PC-9 (cell line): ENCODE measurements at regions of chr3 and their contacts with region 1.

Region 1: GRCh38 chr3:134373994-134374790 is at the start of gene AMOTL2:
- DNase-seq: peak; percentile 86 to 98
- H3K4me3 ChIP-seq: peak within 1 kb of the TSS; percentile 100
- H3K27ac ChIP-seq: peak within 1 kb of the TSS; percentile 98
- H3K4me1 ChIP-seq: peaks cover 70% of the 10 kb centered on the region
- H3K27me3 ChIP-seq: no peaks in the 10 kb centered on the region
- CTCF ChIP-seq: no peak
- total RNA-seq, gene AMOTL2: 147 and 221 TPM in 2 replicates

Region 2: DNA sequence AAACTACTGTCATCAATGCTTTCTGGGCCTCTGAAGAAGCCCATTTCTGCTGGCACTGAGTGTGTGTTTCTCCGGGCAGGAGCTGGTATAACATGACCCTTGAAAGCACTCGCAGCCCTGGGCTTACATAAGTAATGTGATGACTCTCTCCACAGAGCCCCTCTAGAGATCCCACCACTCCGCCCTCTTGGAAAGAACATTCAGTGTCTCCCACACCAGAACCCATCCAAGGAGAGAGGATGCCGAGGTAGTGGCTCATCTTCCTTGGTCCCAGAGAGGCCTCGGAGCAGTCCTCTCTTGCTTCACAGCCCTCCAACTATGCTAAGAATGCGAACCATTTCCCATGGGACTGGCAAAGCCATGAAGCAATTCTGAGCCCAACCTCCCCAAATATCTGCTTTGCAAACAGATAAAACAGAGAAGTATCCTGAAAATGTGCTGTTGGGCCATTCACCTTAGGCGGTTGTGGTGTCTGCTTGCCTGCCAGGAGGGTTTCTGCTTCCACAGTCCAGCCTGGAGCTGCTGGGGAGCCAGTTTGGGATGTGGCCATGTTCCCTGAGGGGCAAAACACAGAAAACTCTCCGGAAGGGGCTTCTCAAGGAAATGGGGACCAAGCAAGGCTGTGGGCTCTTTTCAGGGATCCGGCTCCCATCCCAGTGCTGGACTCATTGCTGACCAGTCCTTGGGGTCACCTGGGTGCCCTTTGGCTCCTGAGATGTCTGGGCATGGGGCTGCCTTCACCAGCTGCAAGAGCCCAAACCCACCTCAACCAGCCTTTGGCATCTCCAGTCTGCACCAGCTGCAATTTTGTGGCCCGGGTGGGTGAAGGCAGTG is 47.2 kb before region 1 on chr3:
- CTCF ChIA-PET with region 1: no interaction called
- POLR2A ChIA-PET with region 1: interaction called, 12 read pairs
- intact Hi-C with region 1: loop called (anchors 1 kb)
- DNase-seq: peak; percentile 86 to 98
- H3K4me3 ChIP-seq: peak overlapping the region; percentile 23; the same call in 1 of the 2 replicates
- H3K27ac ChIP-seq: peak overlapping the region; percentile 97
- H3K4me1 ChIP-seq: peaks cover 91% of the 10 kb centered on the region
- H3K27me3 ChIP-seq: no peaks in the 10 kb centered on the region
- CTCF ChIP-seq: no peak

Region 3: GRCh38 chr3:134357261-134358184 is 16.7 kb before region 1 on chr3:
- CTCF ChIA-PET with region 1: interaction called, 3 read pairs
- POLR2A ChIA-PET with region 1: interaction called, 15 read pairs
- intact Hi-C with region 1: loop called (anchors 1 kb)
- DNase-seq: peak; percentile 91 to 98
- H3K4me3 ChIP-seq: peak overlapping the region; percentile 20; the same call in 1 of the 2 replicates
- H3K27ac ChIP-seq: peak overlapping the region; percentile 100
- H3K4me1 ChIP-seq: peaks cover 99% of the 10 kb centered on the region
- H3K27me3 ChIP-seq: no peaks in the 10 kb centered on the region
- CTCF ChIP-seq: no peak

Region 4: GRCh38 chr3:134427400-134428145 is 53.4 kb after region 1 on chr3:
- CTCF ChIA-PET with region 1: interaction called, 4 read pairs
- POLR2A ChIA-PET with region 1: interaction called, 15 read pairs
- intact Hi-C with region 1: loop called (anchors 1 kb)
- DNase-seq: peak; percentile 93 to 98
- H3K4me3 ChIP-seq: no peak overlapping the region
- H3K27ac ChIP-seq: peak overlapping the region; percentile 60
- H3K4me1 ChIP-seq: peaks cover 31% of the 10 kb centered on the region
- H3K27me3 ChIP-seq: no peaks in the 10 kb centered on the region
- CTCF ChIP-seq: no peak

Region 5: DNA sequence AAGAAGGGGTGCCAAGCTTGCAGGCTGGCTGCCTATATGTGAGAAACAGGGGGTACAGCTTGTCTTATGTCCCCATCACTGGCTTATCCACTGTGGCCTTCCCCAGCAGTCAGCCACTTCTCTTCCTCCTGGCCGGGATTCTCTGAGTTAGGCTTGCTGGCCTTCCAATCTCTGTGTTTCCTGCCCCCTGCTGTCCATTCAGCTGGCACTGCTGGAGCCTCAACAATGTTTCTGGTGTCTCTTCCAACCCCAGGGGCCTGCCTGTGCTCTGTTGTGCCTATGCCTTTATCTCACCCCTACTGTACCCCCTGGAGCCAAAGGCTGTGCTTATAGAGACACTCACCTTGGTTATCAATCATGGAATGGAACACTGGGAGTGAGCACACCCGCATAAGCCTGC is 75.1 kb after region 1 on chr3:
- CTCF ChIA-PET with region 1: interaction called, 4 read pairs
- POLR2A ChIA-PET with region 1: no interaction called
- intact Hi-C with region 1: loop called (anchors 2 kb)
- DNase-seq: peak in 1 of 2 experiments; percentile 27
- H3K4me3 ChIP-seq: no peak overlapping the region
- H3K27ac ChIP-seq: no peak overlapping the region
- H3K4me1 ChIP-seq: peaks cover 18% of the 10 kb centered on the region
- H3K27me3 ChIP-seq: no peaks in the 10 kb centered on the region
- CTCF ChIP-seq: peak; percentile 49